Pancreas (tissue), 10 donors: ENCODE measurements at regions of chr6 and their contacts with region 1.

Region 1: GRCh38 chr6:43506667-43507471 is 3.3 kb downstream of the LRRC73 start:
- DNase-seq: peak; percentile 62 to 86 (median 74)
- ATAC-seq: peak; percentile 44 to 77 (median 68)
- H3K4me3 ChIP-seq: no peak overlapping the region
- H3K27ac ChIP-seq: no peak overlapping the region
- H3K4me1 ChIP-seq: peaks cover 0 to 4% (median 0%) of the 10 kb centered on the region in 3 donors
- H3K27me3 ChIP-seq: no peaks in the 10 kb centered on the region
- CTCF ChIP-seq: peak; percentile 93 to 98 (median 98)

Region 2: DNA sequence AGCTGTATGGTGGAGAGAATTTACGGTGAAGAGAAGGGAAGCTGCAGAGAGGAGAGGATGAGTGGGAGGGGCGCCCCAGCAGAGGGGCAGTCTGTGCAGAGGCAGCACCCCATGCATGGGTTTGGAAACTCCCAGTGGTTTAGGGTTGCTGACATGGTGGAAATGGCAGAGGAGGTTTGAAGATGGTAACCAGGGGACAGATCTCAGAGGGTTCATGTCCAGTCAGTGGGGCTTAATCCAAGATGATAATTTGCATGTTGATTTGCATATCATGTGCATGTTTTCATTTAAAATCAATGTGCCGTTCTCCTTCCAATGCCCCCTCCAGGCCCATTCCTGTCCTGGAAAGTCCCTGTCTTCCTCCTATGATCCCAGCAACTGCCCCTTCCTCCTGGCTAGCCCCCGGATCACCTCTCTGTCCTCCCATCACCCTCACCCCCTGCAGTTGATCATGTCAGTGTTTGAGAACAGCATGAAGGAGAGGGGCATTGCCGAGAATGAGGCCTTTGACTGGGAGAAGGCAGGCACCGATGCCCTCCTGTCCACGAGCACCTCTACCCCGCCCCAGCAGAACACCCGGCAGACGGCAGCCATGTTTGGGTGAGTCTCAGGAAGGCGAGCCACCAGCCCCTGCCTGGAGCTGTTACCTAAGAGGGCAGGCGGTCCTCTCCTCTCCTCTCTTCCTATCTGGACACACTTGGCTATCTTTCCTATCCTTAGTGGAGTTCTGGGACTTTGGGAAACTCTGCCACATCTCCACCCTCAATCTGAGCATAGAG is 249.3 kb before region 1 on chr6:
- intact Hi-C with region 1: loop called in 1 of 3 experiments (anchors 5 kb)
- DNase-seq: no peak
- ATAC-seq: no peak
- H3K4me3 ChIP-seq: no peak overlapping the region
- H3K27ac ChIP-seq: no peak overlapping the region
- H3K4me1 ChIP-seq: no peaks in the 10 kb centered on the region
- H3K27me3 ChIP-seq: no peaks in the 10 kb centered on the region
- CTCF ChIP-seq: no peak

Region 3: GRCh38 chr6:43454696-43455530 is 52.0 kb before region 1 on chr6:
- intact Hi-C with region 1: loop called in 2 of 3 experiments (anchors 5 to 10 kb)
- DNase-seq: peak in 5 of 6 donors; percentile 71 to 96 (median 86)
- ATAC-seq: peak; percentile 88 to 97 (median 96)
- H3K4me3 ChIP-seq: peak overlapping the region; percentile 21 to 59 (median 40)
- H3K27ac ChIP-seq: no peak overlapping the region
- H3K4me1 ChIP-seq: peaks cover 0 to 3% (median 0%) of the 10 kb centered on the region in 3 donors
- H3K27me3 ChIP-seq: peaks cover 0 to 3% (median 0%) of the 10 kb centered on the region in 4 donors
- CTCF ChIP-seq: peak in 1 of 4 donors; percentile 14

Region 4: DNA sequence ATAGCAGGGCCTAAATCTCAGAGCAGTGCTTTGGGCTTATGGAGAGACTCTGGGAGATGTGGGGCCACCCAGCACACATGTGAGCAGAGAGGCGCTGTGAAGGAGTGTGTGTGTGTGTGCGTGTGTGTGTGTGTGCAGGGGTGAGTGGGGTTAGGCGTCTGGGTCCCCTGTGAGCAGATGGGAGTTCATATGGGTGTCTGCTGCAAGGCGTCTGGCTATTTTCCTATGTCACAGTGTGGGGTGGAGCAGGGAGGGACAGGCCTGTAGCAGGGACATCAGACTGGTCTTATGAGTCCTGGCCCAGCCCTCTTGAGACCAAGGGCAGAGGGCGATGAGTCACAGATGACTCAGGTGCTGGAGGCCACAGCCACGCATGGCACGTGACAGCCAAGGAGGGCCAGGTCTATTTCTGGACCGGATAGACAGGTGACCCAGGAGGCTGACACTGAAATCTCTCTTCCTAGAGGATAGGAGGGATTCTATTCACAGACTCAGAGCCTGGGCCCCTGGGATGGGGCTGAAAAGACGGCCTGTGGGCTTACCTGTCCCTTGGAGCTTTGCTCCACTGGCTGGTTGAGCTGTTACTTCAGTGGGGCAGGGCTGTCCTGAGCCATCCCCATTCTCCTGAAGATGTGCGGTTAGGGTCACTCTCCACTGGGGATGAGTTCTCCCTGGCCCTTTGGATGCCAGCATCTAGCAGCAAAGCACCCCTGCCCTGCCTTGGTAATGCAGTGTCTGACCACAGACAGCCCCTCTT is 292.0 kb after region 1 on chr6:
- intact Hi-C with region 1: no loop called
- DNase-seq: peak; percentile 81 to 95 (median 94)
- ATAC-seq: peak; percentile 92 to 96 (median 93)
- H3K4me3 ChIP-seq: no peak overlapping the region
- H3K27ac ChIP-seq: peak overlapping the region in 3 of 4 donors; percentile 40 to 82 (median 74)
- H3K4me1 ChIP-seq: peaks cover 38 to 54% (median 44%) of the 10 kb centered on the region in 3 donors
- H3K27me3 ChIP-seq: no peaks in the 10 kb centered on the region
- CTCF ChIP-seq: no peak